ENCODE measurements at regions of chr10 and their contacts with region 1.

Region 1: GRCh38 chr10:124539935-124540641 is 78.5 kb downstream of the LHPP start:
- DNase-seq: peak; percentile 45
- H3K4me3 ChIP-seq: no peak overlapping the region
- H3K27ac ChIP-seq: no peak overlapping the region
- H3K4me1 ChIP-seq: no peaks in the 10 kb centered on the region
- H3K27me3 ChIP-seq: no peaks in the 10 kb centered on the region
- CTCF ChIP-seq: peak; percentile 72 to 93
- POLR2A ChIP-seq: no peak

Region 2: GRCh38 chr10:124565565-124566256 is 25.6 kb after region 1 on chr10:
- CTCF ChIA-PET with region 1: interaction called, 10 read pairs
- POLR2A ChIA-PET with region 1: no interaction called
- dilution Hi-C with region 1: no loop called
- intact Hi-C with region 1: loop called (anchors 1 kb)
- DNase-seq: no peak
- H3K4me3 ChIP-seq: no peak overlapping the region
- H3K27ac ChIP-seq: no peak overlapping the region
- H3K4me1 ChIP-seq: no peaks in the 10 kb centered on the region
- H3K27me3 ChIP-seq: peaks cover 5 to 7% of the 10 kb centered on the region in 2 experiments
- CTCF ChIP-seq: peak; percentile 11 to 52
- POLR2A ChIP-seq: no peak

Region 3: DNA sequence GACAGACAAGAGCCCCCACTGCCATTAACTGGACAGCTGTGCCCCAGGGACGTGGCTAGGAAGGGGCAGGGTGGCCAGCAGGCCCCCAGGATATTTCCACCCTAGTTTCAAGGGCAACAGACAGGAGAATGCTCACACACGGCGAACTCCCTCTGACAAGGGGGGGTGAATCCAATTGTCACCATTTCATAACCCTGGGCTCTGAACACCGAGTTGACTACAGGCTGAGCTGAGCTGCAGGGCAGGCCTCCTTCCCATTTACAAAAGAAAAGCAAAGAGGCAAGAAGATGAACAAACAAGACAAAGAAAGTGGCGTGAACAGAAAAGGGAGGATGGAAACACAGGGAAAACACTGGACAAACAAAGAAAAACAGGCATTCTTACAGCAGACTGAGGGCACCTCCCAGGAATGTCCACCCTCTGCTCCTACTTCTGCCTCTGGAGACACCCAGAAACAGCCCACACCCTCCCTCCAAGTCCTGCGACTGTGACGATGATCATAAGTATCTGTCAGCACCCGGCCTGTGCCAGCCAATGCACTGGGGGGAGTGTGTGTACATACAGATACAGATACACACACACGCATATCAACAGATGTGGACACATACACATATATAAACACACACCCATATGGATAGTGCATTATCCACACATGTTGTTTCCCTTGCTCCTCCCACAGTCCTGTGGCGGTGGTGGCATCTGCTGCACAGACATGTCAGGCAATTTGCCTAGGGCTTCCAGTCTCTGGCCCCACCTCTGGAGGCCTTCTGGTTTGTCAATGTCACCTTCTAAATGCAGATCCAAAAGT is 137.9 kb after region 1 on chr10:
- CTCF ChIA-PET with region 1: no interaction called
- POLR2A ChIA-PET with region 1: no interaction called
- dilution Hi-C with region 1: no loop called
- intact Hi-C with region 1: no loop called
- DNase-seq: no peak
- H3K4me3 ChIP-seq: no peak overlapping the region
- H3K27ac ChIP-seq: no peak overlapping the region
- H3K4me1 ChIP-seq: no peaks in the 10 kb centered on the region
- H3K27me3 ChIP-seq: no peaks in the 10 kb centered on the region
- CTCF ChIP-seq: no peak
- POLR2A ChIP-seq: no peak

Region 4: DNA sequence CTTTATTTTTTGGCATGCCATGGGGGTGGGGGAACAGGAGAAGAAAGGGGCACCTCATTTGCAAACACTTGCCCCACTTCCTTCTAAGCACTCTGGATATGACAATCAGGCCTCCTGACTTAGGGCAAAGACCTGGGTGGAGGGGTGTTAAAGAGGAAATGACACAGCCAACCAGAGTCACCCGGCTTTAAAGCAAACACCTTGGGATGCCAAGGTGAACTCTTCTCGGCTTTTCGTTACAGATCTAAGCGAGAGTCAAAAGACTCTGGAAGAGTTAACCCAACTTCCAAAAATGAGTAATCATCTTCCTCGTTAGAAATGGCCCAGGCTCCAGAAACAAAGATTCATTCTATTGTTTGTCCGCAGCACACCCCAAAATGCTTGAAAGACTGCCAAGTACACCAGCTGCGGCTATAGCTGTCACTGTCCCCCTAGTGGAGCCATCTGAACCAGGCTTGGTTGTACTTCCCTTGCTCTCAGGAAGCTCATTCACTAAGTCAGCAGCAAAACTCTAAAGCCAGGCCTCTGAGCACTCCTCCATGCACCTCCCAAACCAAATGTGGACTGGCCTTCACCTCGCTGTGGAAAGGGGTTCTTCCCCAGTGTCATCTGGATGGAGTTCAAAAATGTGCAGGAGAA is 179.2 kb after region 1 on chr10:
- CTCF ChIA-PET with region 1: interaction called, 14 read pairs
- POLR2A ChIA-PET with region 1: no interaction called
- dilution Hi-C with region 1: no loop called
- intact Hi-C with region 1: no loop called
- DNase-seq: peak; percentile 84
- H3K4me3 ChIP-seq: no peak overlapping the region
- H3K27ac ChIP-seq: no peak overlapping the region
- H3K4me1 ChIP-seq: peaks cover 26% of the 10 kb centered on the region
- H3K27me3 ChIP-seq: no peaks in the 10 kb centered on the region
- CTCF ChIP-seq: peak; percentile 61 to 74
- POLR2A ChIP-seq: no peak

Region 5: GRCh38 chr10:124827474-124827873 is 287.4 kb after region 1 on chr10:
- CTCF ChIA-PET with region 1: interaction called, 9 read pairs
- POLR2A ChIA-PET with region 1: no interaction called
- dilution Hi-C with region 1: no loop called
- intact Hi-C with region 1: loop called (anchors 1 kb)
- DNase-seq: peak; percentile 36
- H3K4me3 ChIP-seq: no peak overlapping the region
- H3K27ac ChIP-seq: no peak overlapping the region
- H3K4me1 ChIP-seq: no peaks in the 10 kb centered on the region
- H3K27me3 ChIP-seq: no peaks in the 10 kb centered on the region
- CTCF ChIP-seq: peak; percentile 26 to 35
- POLR2A ChIP-seq: no peak

Measured in endothelial cell of umbilical vein (primary cell).